ENCODE measurements at regions of chr13 and their contacts with region 1.

Region 1: DNA sequence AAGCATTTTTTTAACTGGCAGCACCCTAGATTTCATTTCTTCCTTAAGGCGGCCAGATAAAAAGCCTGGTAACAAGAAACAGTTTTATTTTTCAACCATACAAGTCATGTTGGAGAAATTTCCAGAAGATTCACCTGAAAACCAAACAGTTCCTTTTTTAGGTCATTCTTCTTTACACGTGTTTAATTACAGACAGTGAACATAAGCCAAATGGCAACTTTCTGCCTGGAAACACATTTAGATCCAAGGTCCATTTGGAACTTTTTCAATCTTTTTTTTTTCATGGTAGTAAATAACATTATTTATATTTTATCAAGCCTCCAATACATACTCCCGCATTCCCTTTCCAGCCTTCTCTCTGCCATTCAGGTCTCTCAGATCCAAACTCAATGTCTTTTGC is 886.1 kb upstream of the MIR17HG start:
- DNase-seq: no peak
- ATAC-seq: no peak
- H3K4me3 ChIP-seq: no peak overlapping the region
- H3K27ac ChIP-seq: no peak overlapping the region
- H3K4me1 ChIP-seq: no peaks in the 10 kb centered on the region
- H3K27me3 ChIP-seq: no peaks in the 10 kb centered on the region
- CTCF ChIP-seq: no peak

Region 2: GRCh38 chr13:90855513-90855912 is 394.1 kb after region 1 on chr13:
- intact Hi-C with region 1: loop called in 1 of 3 experiments (anchors 10 kb)
- DNase-seq: no peak
- ATAC-seq: no peak
- H3K4me3 ChIP-seq: no peak overlapping the region
- H3K27ac ChIP-seq: no peak overlapping the region
- H3K4me1 ChIP-seq: no peaks in the 10 kb centered on the region
- H3K27me3 ChIP-seq: no peaks in the 10 kb centered on the region
- CTCF ChIP-seq: no peak